ENCODE measurements at regions of chr7 and their contacts with region 1.

Region 1: GRCh38 chr7:151028131-151028947 is at the start of gene ABCB8:
- DNase-seq: peak; percentile 98 to 100
- H3K4me3 ChIP-seq: peak within 1 kb of the TSS; percentile 68 to 77
- H3K27ac ChIP-seq: peak within 1 kb of the TSS; percentile 60 to 78
- H3K4me1 ChIP-seq: peaks cover 0 to 7% of the 10 kb centered on the region in 2 donors
- H3K27me3 ChIP-seq: no peaks in the 10 kb centered on the region
- CTCF ChIP-seq: peak in 2 of 3 experiments; percentile 59 to 68
- total RNA-seq, gene ABCB8: 50.8 TPM

Region 2: DNA sequence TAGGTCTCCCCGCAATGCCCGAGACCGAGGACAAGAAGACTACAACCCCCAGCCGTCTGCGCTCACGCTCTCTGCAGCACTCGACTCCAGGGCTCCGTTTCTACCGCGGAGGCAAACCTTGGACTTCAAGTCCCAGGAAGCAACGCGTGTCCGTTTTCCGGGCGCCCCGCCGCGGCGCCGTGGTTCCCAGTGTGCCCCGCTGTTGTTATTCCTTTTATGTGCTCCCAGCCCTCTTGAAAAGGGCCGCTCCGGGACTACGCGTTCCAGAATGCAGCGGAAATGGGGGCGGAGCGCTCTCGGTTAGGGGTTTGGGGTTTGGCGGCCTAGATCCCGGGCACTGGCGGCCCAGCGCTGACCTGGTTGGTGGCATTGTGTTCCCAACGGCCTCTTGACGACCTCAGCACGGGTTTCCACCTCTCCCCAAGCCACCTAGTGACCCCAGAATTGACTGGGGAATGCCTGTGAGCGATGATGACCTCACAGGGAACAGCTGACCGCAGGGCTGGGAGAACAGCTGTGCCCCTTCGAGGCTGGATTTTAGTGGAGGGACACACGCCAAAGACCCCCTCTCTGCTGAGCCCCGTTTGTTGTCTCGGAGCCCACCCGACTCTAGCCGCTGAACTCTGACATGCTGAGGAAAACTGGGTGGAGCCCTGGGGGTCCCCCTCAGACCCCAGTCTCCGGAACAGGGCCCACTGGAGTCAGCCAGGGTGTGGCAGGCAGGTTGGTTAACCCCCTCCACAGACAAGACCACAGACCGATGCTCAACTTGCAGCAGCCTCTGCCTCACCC is 29.8 kb after region 1 on chr7:
- intact Hi-C with region 1: loop called (anchors 1 kb)
- DNase-seq: peak; percentile 98 to 100
- H3K4me3 ChIP-seq: peak overlapping the region; percentile 92 to 95
- H3K27ac ChIP-seq: peak overlapping the region; percentile 85 to 95
- H3K4me1 ChIP-seq: peaks cover 21 to 44% of the 10 kb centered on the region in 2 donors
- H3K27me3 ChIP-seq: no peaks in the 10 kb centered on the region
- CTCF ChIP-seq: no peak

Region 3: DNA sequence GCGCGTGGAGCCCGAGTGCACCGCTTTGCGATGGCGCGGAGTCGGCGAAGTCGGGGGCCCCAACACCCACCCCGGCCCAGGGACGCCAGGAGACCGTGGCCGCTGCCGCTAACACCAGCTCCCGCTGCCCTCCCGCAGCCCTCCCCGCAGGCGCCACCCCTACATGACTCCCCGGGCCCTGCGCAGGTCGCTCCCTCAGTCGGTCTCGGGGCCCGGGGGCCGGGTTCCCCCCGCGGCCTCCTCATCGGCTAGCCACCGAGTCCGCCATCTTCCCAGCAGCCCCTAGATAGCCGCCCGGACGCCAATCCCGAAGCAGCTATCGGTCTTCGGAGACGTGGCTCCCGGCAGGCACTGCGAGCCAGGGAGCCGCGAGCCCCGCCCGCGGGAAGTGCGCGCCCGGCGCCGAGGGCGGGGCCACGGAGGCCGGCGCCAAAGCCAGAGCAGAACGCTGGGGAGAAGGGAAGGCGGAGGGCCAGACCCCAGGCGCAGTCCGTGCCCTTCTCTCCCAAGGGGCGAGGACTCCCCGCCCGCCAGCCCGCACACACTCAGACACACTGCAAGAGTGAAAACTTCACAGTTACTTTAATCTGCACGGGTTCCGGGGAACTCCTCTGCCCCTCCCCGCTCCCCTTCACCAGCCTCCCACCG is 52.3 kb after region 1 on chr7 and contains the start of gene FASTK:
- intact Hi-C with region 1: loop called (anchors 1 kb)
- DNase-seq: peak; percentile 84 to 95
- H3K4me3 ChIP-seq: peak within 1 kb of the TSS; percentile 75 to 87
- H3K27ac ChIP-seq: peak within 1 kb of the TSS; percentile 95 to 96
- H3K4me1 ChIP-seq: peaks cover 24 to 35% of the 10 kb centered on the region in 2 donors
- H3K27me3 ChIP-seq: no peaks in the 10 kb centered on the region
- CTCF ChIP-seq: no peak
- total RNA-seq, gene FASTK: 121 TPM

Region 4: DNA sequence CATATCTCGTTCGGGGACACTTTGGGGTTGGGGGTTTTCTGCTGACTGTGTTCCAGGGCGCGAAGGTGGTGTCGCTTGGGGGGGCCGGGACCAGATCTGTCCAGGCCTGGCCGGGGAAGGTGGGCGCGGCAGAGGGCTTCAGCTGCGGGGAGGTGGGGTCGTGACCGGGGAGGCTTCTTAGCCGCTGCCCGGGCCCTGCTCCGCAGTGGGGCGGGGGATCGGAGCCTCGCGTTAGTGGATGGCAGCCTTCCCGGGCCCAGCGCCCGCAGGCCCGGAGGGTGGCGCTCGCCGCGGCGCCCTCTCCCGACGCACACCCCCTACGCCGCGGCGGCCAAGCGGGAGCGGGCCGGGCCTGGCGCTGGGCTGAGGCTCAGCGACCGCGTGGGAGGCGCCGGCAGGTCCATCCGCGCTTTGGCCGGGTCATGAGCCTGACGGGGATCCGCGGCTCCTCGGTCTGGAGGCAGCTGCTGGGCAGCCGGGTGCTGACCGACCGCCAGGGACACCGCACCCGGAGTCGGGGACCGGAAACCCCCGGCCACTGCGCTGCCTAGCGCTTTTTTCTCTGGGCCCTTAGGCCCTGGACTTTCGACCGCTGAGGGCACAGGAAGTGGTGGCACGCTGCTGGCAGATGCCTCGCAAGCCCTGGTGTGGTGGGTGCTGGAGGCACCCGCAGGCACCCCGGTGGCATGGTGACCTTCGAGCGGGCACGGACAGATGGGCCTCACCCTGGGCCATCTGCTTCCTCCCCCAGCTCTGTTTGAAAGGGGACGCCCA is 59.1 kb after region 1 on chr7:
- intact Hi-C with region 1: loop called (anchors 1 kb)
- DNase-seq: no peak
- H3K4me3 ChIP-seq: peak overlapping the region; percentile 63 to 85
- H3K27ac ChIP-seq: peak overlapping the region; percentile 64 to 82
- H3K4me1 ChIP-seq: peaks cover 10 to 36% of the 10 kb centered on the region in 2 donors
- H3K27me3 ChIP-seq: no peaks in the 10 kb centered on the region
- CTCF ChIP-seq: peak in 2 of 3 experiments; percentile 10 to 29

Region 5: GRCh38 chr7:151226875-151227782 is 198.8 kb after region 1 on chr7 and contains the start of gene ABCF2:
- intact Hi-C with region 1: loop called (anchors 2 kb)
- DNase-seq: peak; percentile 98 to 100
- H3K4me3 ChIP-seq: peak within 1 kb of the TSS; percentile 79 to 94
- H3K27ac ChIP-seq: peak within 1 kb of the TSS; percentile 63 to 72
- H3K4me1 ChIP-seq: peaks cover 7 to 12% of the 10 kb centered on the region in 2 donors
- H3K27me3 ChIP-seq: no peaks in the 10 kb centered on the region
- CTCF ChIP-seq: no peak
- total RNA-seq, gene ABCF2: 85.3 TPM

Measured in ascending aorta (tissue), 2 donors.